GM13976 (cell line): ENCODE measurements at regions of chr12 and their contacts with region 1.

Region 1: DNA sequence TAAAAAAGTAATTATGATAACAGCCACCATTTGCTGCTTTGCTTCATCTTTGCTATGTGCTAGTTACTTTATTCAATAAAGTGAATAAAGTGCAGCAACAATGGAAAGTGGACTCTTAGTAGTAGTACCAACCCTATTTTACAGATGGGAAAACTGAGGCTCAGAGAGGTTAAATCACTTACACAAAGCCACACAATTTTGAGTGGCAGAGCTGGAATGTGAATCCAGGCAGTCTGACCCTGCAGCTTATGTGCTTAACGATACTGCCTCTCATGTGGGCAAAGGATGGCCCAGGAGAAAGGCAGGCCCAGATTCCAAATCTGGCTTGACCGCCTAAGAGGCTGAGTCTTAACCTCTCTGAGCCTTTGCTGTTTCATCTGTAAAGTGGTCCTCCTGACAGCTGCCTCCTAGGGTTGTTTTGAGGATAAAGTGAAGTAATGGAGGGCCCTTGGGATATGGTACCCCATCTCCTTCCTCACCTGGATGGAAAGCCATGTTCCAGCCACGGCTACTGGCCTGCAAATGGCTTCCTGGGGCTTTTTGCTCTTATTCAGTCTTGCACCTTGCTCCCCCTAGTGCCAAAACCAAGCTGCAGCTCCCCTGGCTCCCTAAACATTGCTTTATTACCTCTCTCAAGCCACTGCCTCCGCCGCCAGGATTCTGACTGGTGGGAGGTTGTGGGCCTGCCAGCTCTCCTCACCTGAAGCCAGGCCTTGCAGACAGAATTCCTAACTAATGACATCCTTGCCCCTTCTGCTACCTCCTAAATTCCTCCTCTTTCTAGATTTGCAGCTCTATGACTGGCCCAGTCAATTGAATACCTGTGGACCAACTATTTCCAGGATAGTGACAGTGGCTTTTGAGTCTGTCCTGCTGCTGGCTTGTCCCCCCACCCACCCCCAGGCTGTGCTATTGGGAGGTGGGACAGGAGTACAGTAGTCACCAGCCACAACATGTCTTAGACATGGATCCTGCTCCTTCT is 283.3 kb upstream of the PWP1 start:
- DNase-seq: peak; percentile 57
- CTCF ChIP-seq: peak; percentile 51

Region 2: GRCh38 chr12:107131832-107132616 is 270.3 kb before region 1 on chr12:
- in situ Hi-C with region 1: loop called (anchors 10 kb)
- DNase-seq: peak; percentile 44
- CTCF ChIP-seq: peak; percentile 72

Region 3: GRCh38 chr12:107607464-107608392 is 205.4 kb after region 1 on chr12:
- in situ Hi-C with region 1: loop called (anchors 25 kb)
- DNase-seq: peak; percentile 80
- CTCF ChIP-seq: peak; percentile 76